H1 (cell line): ENCODE measurements at regions of chr14 and their contacts with region 1.

Region 1: DNA sequence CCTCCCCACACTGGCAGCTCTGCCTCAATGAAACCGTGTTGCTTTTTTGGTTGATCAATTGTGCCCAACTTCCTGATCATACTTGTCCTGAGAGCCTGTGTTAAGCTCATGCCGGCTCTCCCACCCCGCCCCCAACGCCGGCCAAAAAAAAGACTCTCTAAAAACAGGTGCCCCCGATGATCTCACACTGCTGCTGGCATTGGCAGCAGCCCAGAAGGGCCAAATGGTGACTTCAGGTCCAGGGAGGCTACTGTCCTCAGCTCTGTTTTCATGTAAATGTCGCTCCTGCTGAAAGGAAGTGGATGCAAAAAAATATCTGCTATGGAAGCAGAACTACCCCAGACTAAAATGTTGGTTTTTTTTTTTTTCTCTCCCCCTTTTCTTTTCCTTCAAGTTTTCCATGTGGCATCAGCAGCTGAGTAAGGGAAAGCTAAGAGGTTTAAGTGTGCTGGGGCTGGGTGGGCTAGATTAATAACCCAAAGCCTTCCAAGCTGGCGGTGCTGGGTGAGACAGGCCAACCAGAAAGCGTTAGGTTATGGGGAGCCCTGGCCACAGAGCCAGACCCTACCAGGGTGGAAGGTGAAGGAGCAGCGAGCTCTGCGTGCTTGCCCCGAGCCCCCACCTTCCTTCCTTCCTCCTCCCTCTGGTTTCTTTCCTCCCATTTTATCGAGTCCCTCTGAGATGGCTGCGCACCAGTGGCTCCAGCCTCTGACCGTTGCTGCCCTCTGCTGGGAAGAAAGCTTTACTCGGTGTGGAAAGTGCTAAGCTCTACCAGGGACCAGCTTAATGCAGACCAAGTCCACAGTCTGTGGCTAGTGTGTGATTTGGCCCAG is 396.1 kb downstream of the NRXN3 start:
- DNase-seq: peak; percentile 64 to 93
- H3K4me3 ChIP-seq: peak overlapping the region in 1 of 4 experiments; percentile 29; a peak in 2 of 8 replicates
- H3K27ac ChIP-seq: no peak overlapping the region
- H3K4me1 ChIP-seq: peaks cover 0 to 6% (median 4%) of the 10 kb centered on the region in 4 experiments; a peak in 4 of 7 replicates
- H3K27me3 ChIP-seq: no peaks in the 10 kb centered on the region
- CTCF ChIP-seq: peak; percentile 77 to 94 (median 93)
- EP300 ChIP-seq: no peak
- POLR2A ChIP-seq: no peak
- RAD21 ChIP-seq: peak; percentile 98

Region 2: GRCh38 chr14:78164238-78164853 is 401.9 kb before region 1 on chr14:
- CTCF ChIA-PET with region 1: interaction called, 13 read pairs
- POLR2A ChIA-PET with region 1: no interaction called
- DNase-seq: peak; percentile 50 to 82
- H3K4me3 ChIP-seq: no peak overlapping the region
- H3K27ac ChIP-seq: no peak overlapping the region
- H3K4me1 ChIP-seq: peaks cover 0 to 5% (median 0%) of the 10 kb centered on the region in 4 experiments; a peak in 1 of 7 replicates
- H3K27me3 ChIP-seq: no peaks in the 10 kb centered on the region
- CTCF ChIP-seq: peak; percentile 86 to 99 (median 99)
- EP300 ChIP-seq: no peak
- POLR2A ChIP-seq: no peak
- RAD21 ChIP-seq: peak; percentile 82 to 89

Region 3: GRCh38 chr14:78425330-78425729 is 140.9 kb before region 1 on chr14:
- CTCF ChIA-PET with region 1: no interaction called
- POLR2A ChIA-PET with region 1: no interaction called
- DNase-seq: no peak
- H3K4me3 ChIP-seq: no peak overlapping the region
- H3K27ac ChIP-seq: no peak overlapping the region
- H3K4me1 ChIP-seq: no peaks in the 10 kb centered on the region; a peak in 1 of 7 replicates
- H3K27me3 ChIP-seq: no peaks in the 10 kb centered on the region
- CTCF ChIP-seq: no peak
- EP300 ChIP-seq: no peak
- POLR2A ChIP-seq: no peak
- RAD21 ChIP-seq: no peak

Region 4: DNA sequence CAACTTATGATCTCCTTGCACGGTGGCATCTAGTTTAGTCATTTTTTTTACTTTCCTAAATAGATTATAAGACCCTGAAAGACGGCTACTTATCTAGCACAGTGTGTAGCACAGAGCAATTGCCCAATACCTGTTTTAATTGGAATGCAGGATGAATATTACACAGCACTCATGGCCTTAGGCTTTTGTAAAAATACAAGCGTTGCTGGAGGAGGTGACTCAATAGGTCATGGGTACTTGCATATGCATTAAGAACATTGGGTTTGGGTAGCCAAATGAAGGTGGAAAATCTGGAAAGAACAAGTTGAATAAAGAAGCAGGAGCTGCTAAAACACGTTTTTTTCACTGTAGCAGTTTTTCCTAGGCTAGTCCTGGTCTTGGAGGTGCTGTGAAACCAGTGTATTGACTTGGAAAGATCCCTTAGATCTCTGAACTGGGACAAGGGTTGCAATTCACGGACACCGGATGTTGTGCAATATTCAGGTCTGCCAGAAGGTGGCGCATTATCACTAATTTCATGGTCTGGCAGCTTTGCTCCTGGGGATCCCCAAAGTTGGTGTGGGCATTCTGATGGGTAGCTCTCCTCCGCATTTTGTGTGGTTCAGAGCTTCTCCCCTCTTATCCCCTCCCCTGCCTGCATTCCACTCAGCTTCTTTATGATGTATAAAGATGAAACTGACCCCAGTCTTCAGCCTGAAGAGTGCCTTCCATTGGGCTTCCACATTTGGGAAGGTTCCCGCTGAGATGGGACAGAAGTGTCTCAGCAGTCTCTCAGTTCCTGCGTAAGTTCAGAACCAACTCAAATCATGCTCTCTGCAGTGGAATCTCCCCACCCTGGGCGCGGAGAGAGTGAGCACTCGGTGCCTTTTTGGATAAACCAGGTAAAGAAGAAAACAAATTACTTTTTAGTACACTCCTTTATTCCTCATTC is 117.8 kb before region 1 on chr14:
- CTCF ChIA-PET with region 1: interaction called, 47 read pairs
- POLR2A ChIA-PET with region 1: no interaction called
- DNase-seq: peak; percentile 34 to 93
- H3K4me3 ChIP-seq: no peak overlapping the region
- H3K27ac ChIP-seq: no peak overlapping the region
- H3K4me1 ChIP-seq: no peaks in the 10 kb centered on the region
- H3K27me3 ChIP-seq: no peaks in the 10 kb centered on the region
- CTCF ChIP-seq: peak; percentile 67 to 89 (median 89)
- EP300 ChIP-seq: no peak
- POLR2A ChIP-seq: no peak
- RAD21 ChIP-seq: peak; percentile 91 to 95

Region 5: GRCh38 chr14:78598041-78598920 is 32.0 kb after region 1 on chr14:
- CTCF ChIA-PET with region 1: interaction called, 38 read pairs
- POLR2A ChIA-PET with region 1: no interaction called
- DNase-seq: peak; percentile 53 to 76
- H3K4me3 ChIP-seq: no peak overlapping the region
- H3K27ac ChIP-seq: no peak overlapping the region
- H3K4me1 ChIP-seq: peaks cover 0 to 3% (median 0%) of the 10 kb centered on the region in 4 experiments; a peak in 1 of 7 replicates
- H3K27me3 ChIP-seq: no peaks in the 10 kb centered on the region
- CTCF ChIP-seq: peak; percentile 95 to 97 (median 95)
- EP300 ChIP-seq: no peak
- POLR2A ChIP-seq: no peak
- RAD21 ChIP-seq: peak; percentile 91 to 95

Region 6: DNA sequence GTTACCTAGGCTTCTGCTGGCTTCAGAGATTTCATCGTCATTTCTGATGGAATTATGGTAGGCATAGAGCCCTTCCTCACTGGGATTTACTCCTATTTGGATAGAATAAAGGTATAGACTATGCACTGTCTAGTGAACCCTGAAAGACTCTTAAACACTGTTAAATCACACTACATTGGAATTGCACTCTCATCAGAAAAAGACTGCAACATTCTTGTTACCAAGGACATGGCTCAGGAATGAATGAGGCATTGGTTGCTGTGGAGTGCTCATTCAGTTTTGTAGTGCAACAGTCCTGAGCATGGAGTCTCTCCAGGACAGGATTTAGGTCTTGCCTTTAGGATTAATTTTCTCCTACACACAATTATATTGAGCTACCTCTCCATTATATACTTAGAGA is 86.9 kb after region 1 on chr14:
- CTCF ChIA-PET with region 1: no interaction called
- POLR2A ChIA-PET with region 1: no interaction called
- DNase-seq: no peak
- H3K4me3 ChIP-seq: no peak overlapping the region
- H3K27ac ChIP-seq: no peak overlapping the region
- H3K4me1 ChIP-seq: no peaks in the 10 kb centered on the region
- H3K27me3 ChIP-seq: no peaks in the 10 kb centered on the region
- CTCF ChIP-seq: no peak
- EP300 ChIP-seq: no peak
- POLR2A ChIP-seq: no peak
- RAD21 ChIP-seq: no peak